Dendritic cell treated with granulocyte-macrophage colony-stimulating factor and Interleukin-4, amounts not matched to agents 40 ng/mL and 50 ng/mL, for 4 days (primary cell): ENCODE measurements at regions of chr9 and their contacts with region 1.

Region 1: GRCh38 chr9:19527663-19528062 is 118.9 kb downstream of the ACER2 start:
- H3K4me3 Mint-ChIP-seq: no peak overlapping the region
- H3K27ac Mint-ChIP-seq: no peak overlapping the region
- H3K4me1 Mint-ChIP-seq: no peaks in the 10 kb centered on the region
- H3K27me3 Mint-ChIP-seq: no peaks in the 10 kb centered on the region

Region 2: DNA sequence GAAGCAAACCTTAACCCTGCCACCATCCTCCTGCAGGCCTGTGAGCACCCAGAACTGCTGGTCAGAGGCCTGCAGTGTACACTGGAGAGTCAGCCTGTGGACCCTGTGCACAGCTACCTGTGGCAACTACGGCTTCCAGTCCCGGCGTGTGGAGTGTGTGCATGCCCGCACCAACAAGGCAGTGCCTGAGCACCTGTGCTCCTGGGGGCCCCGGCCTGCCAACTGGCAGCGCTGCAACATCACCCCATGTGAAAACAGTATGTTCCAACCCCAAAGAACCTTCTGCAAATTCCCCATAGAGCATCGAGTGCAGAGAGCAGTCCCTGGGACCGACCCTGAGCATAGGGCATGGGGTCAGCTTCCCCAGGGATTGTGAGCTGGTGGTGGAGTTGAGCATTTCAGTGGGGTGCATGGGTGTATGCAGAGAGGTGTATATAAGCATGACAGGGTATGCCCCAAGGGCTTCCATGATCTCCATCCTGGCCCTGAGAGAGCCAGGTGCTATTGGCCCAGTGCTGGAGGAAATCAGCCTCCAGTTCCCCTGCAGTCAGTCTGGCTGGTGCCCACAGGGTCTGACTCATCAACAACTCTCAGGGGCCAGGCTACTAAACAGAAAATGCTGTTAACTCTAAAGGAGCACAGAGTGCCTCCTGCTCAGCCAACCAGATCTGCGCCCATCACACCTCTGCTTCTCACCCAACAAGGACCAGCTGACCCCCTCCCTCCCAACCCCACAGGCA is 620.8 kb before region 1 on chr9:
- intact Hi-C with region 1: no loop called
- H3K4me3 Mint-ChIP-seq: no peak overlapping the region
- H3K27ac Mint-ChIP-seq: no peak overlapping the region
- H3K4me1 Mint-ChIP-seq: no peaks in the 10 kb centered on the region
- H3K27me3 Mint-ChIP-seq: peaks cover 1% of the 10 kb centered on the region

Region 3: GRCh38 chr9:19513671-19514275 is 13.9 kb before region 1 on chr9:
- intact Hi-C with region 1: no loop called
- H3K4me3 Mint-ChIP-seq: no peak overlapping the region
- H3K27ac Mint-ChIP-seq: no peak overlapping the region
- H3K4me1 Mint-ChIP-seq: no peaks in the 10 kb centered on the region
- H3K27me3 Mint-ChIP-seq: no peaks in the 10 kb centered on the region

Region 4: GRCh38 chr9:19577411-19577810 is 49.7 kb after region 1 on chr9:
- intact Hi-C with region 1: loop called (anchors 10 kb)
- H3K4me3 Mint-ChIP-seq: no peak overlapping the region
- H3K27ac Mint-ChIP-seq: no peak overlapping the region
- H3K4me1 Mint-ChIP-seq: no peaks in the 10 kb centered on the region
- H3K27me3 Mint-ChIP-seq: no peaks in the 10 kb centered on the region